ENCODE measurements at regions of chr5 and their contacts with region 1.

Region 1: GRCh38 chr5:57298295-57298984 is 124.6 kb downstream of the GPBP1 start:
- DNase-seq: peak; percentile 89
- H3K4me3 Mint-ChIP-seq: no peak overlapping the region
- H3K27ac Mint-ChIP-seq: no peak overlapping the region
- H3K4me1 Mint-ChIP-seq: peaks cover 21% of the 10 kb centered on the region
- H3K27me3 Mint-ChIP-seq: no peaks in the 10 kb centered on the region
- CTCF ChIP-seq: peak; percentile 65

Region 2: GRCh38 chr5:57432876-57433275 is 134.4 kb after region 1 on chr5:
- CTCF ChIA-PET with region 1: interaction called, 3 read pairs
- POLR2A ChIA-PET with region 1: no interaction called
- intact Hi-C with region 1: loop called (anchors 1 kb)
- DNase-seq: peak; percentile 50
- H3K4me3 Mint-ChIP-seq: no peak overlapping the region
- H3K27ac Mint-ChIP-seq: no peak overlapping the region
- H3K4me1 Mint-ChIP-seq: peaks cover 27% of the 10 kb centered on the region
- H3K27me3 Mint-ChIP-seq: no peaks in the 10 kb centered on the region
- CTCF ChIP-seq: peak; percentile 42

Region 3: DNA sequence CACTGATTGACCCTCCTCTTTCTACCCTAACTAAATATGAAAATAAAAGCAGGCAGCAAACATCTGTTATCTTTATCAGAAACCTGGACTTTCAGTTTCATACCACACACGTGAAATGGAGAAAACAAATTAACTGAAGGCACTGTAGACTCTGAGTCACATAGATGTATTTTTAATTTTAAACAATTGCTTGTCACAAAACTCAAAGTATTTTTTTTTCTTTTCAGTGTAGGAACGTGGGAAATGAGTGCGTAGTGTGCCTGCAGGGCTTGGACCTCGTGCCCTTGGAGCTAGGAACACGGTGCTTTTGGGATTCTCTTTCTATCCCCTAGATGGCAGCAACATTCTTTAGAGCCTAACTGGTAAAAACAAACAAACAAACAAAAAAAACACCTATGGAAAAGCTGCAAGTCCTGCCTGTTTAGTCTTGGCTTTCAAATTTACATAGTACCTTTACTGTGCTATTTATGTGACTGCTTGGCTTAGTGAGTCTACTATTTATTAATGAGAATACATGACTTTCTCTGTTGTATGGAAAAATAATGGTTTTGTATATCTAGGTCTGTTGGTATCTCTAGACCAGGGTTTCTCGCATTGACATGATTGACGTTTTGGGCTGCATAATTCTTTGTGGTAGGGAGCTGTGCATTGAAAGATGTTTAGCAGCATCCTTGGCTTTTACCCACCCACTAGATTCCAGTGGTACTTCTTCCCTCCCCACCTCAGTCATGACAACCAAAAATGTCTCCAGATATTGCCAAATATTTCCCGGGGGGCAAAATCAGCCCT is 201.0 kb after region 1 on chr5:
- CTCF ChIA-PET with region 1: interaction called, 108 read pairs
- POLR2A ChIA-PET with region 1: interaction called, 9 read pairs
- intact Hi-C with region 1: loop called (anchors 1 kb)
- DNase-seq: peak; percentile 69
- H3K4me3 Mint-ChIP-seq: peak overlapping the region; percentile 53
- H3K27ac Mint-ChIP-seq: no peak overlapping the region
- H3K4me1 Mint-ChIP-seq: peaks cover 21% of the 10 kb centered on the region
- H3K27me3 Mint-ChIP-seq: no peaks in the 10 kb centered on the region
- CTCF ChIP-seq: peak; percentile 63

Region 4: DNA sequence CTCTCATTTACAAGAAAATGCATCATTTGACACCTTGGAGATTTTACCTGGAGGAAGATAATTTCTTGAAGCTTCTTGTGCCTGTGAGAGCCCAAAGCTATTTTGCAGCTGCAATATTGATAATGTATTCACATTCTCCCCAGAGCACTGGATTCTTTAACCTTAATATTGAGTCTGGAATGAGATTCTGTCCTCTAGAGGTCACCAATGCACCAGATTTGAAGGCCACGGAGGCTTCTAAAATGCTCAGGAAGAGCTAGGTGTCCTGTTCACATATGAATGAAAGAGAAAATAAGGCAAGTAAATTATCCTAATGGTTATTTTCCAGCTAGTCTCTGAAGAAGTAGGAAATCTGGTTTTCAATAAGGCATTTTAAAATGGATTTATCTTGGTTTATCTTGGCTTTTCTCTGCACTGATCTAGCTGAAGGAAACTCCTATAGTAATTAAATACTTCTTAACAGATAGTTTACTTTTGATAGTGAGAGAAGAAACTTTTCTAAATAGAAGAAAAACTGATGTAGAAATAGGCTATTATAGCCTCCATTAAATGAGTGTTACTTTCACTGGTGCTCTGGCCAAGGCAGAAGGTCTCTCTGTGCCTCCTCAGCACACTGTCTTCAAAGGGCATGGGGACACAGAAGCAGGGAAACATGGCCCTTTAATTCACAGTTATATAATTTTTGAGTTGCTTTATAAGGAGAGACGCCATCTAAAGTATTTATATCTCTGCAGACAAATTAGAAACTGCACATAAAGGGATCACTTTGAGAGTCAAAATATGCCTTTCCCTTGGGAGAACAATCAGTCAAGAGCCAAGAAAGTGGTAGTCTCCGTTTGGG is 481.2 kb after region 1 on chr5:
- CTCF ChIA-PET with region 1: interaction called, 62 read pairs
- POLR2A ChIA-PET with region 1: interaction called, 3 read pairs
- intact Hi-C with region 1: loop called (anchors 1 kb)
- DNase-seq: peak; percentile 78
- H3K4me3 Mint-ChIP-seq: no peak overlapping the region
- H3K27ac Mint-ChIP-seq: no peak overlapping the region
- H3K4me1 Mint-ChIP-seq: peaks cover 6% of the 10 kb centered on the region
- H3K27me3 Mint-ChIP-seq: no peaks in the 10 kb centered on the region
- CTCF ChIP-seq: peak; percentile 64

Measured in MCF 10A (cell line).